ENCODE measurements at regions of chr20 and their contacts with region 1.

Region 1: DNA sequence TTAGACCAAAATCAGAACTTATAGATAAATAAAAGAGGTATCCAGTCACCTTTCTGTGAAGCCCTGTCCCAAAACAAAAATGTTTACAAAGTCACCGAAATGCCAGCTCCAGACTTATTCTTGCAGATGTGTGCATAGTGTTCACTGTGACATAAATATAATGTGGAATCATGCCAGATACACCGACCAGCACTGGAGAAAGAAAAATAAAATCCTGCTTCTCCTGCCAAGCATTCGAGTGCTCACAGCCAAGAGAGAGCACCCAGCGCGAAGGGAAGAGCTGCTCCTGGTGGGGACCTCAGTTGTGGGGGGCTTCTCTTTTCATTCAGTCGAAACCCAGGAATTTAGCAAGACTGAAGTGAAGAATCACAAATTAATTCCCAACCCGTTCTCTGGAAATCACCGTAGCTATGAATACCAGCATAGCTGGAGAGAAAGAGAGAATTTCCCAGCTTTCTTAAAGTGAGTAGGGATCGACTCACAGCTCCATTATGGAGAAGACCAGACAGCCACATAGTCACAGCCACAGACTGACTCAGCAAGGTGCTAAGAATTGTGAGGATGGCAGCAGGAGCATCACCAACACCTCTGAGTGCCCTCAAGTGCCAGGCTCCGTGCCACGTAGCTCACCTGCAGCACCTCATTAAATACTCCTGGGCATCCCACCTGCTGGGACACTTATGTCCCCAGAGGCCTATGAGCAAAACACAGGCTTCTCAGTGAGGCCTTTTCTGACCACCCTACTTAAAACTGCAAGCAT is 33.2 kb downstream of the BFSP1 start:
- DNase-seq: no peak
- H3K4me3 ChIP-seq: no peak overlapping the region
- H3K4me1 ChIP-seq: no peaks in the 10 kb centered on the region
- H3K27me3 ChIP-seq: no peaks in the 10 kb centered on the region

Region 2: DNA sequence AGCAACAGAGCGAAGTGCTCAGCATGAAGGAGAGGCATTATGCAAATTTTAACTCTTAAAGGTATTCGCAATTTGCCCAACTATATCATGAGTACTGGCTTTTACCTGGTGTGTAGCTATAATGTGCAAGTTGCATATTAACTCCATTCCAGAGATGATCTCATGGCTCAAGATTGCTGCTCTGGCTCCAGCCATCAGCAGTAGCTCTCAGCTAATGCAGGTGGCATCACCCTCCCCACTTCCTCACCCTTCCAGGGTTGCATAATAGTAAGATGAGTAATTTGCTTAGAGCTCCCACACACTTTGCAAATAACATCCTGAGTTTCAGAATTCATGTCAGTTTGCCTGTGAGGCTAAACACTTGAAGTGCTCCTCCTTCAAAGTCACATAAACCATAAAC is 287.0 kb before region 1 on chr20:
- in situ Hi-C with region 1: no loop called
- DNase-seq: no peak
- H3K4me3 ChIP-seq: no peak overlapping the region
- H3K4me1 ChIP-seq: no peaks in the 10 kb centered on the region
- H3K27me3 ChIP-seq: no peaks in the 10 kb centered on the region

Region 3: DNA sequence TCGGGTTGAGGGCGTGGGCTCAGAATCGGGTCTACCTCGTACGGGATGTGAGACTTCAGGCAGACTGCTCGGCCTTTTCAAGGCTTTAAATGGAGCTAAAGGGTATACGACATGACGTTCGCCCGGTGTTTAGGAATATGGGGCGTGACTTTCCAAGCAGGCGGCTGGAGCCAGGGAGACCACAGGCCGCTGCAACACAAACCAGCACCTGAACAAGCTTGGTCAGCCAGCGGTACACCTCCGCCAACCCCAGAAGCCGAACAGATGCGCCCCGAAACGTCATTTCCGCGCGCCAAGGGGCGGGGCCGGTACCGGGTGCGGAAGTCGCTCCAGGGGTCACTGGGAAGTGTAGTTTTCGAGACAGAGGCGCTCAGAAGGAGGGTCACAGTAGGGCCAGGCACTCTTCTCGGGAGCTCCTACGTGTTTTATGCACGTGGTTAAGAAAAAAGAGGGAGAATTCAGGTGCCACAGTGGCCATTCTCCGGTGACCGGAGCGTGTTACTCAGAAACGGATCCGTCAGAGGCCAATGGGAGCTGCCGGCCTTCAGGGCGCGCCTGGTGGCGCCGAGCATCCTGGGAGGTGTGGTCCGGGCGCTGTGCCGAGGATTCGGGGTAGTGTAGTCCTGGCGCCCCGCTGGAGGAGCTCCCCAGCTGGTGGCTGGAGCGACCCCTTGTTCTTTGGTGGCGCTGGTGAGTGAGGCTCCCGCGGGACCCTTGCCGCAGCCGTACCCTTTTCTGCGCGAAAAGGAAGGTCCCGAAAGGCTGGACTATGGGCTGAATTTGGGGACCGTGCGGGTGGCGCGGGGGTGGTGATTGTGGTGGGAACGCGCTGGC is 790.1 kb after region 1 on chr20 and contains the start of gene ZNF133:
- in situ Hi-C with region 1: loop called (anchors 25 kb)
- DNase-seq: peak; percentile 77 to 95
- H3K4me3 ChIP-seq: peak within 1 kb of the TSS; percentile 93
- H3K4me1 ChIP-seq: peaks cover 4% of the 10 kb centered on the region
- H3K27me3 ChIP-seq: peaks cover 7% of the 10 kb centered on the region

Measured in HAP-1 (cell line).